ENCODE measurements at regions of chr18 and their contacts with region 1.

Region 1: DNA sequence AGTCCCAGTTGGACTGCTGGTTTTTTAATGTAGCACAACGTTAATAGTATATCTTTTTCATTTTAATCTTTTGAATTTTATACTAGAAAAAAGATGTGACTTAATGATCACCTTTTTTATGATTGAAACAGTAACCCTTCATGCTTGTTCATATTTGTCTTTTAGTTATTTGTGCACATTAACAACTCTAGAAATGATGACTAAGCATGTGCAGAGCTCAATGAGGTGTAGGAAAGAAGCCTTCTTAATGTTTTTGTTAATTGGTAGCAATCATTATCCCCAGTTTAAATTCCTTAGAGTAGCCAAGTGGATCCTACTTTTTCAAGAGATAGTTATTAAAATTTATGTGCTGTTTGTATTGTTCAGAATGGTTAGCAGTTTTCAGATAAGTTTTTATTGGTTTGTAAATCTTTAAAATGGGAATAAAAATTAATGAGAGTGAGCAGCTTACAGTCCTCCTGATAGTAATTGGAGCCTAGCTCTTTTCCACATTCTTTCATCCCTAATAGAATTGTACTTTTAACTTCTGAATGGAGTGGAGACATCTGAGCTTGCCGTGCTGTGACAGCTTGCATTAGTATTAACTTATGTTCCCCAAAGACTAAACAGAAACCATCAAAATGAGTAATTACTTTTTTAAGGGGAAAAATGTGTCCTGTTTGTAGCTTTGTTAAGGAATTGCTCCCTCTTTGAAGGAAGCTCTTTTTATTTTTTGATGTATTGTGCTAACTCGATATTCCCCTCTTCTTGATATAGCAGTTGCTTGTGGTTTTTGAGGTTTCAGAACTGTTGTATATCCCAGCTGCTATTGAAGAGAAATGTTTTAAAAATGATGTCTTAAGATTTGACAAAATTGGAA is 17.3 kb downstream of the PIK3C3 start:
- DNase-seq: no peak
- ATAC-seq: peak; percentile 48
- H3K4me3 ChIP-seq: no peak overlapping the region; the same call in 1 of the 2 replicates
- H3K27ac ChIP-seq: peak overlapping the region; percentile 24; the same call in 1 of the 2 replicates
- H3K4me1 ChIP-seq: peaks cover 10% of the 10 kb centered on the region
- H3K27me3 ChIP-seq: no peaks in the 10 kb centered on the region
- CTCF ChIP-seq: no peak
- EP300 ChIP-seq: no peak
- POLR2A ChIP-seq: no peak
- RAD21 ChIP-seq: no peak

Region 2: DNA sequence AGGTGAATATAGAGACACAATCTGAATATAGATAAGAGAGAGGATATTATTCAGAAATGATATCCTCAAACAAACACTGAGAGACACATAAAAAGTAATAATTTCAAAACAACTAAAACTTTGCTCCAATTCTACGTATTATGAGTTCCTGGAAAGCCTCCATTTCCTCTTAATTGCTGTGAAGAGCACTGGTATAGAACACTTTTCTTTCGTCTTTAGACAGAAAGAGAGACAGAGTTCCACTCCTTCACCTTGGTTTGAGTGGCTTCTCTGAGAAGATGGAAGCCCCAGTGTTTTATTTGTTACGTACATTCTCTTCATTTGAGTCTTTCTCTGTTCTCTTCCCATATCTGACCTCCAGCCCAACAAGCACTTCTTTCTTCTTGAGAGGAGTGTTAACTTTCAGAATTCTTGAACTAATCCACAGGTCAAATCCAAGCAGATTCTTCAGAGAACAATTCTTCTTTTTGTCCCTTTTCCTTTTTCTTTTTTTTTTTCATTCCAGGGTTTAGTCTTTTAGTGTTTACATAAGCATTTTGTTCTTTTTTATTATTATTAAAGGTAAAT is 23.7 kb before region 1 on chr18:
- CTCF ChIA-PET with region 1: interaction called, 4 read pairs
- POLR2A ChIA-PET with region 1: interaction called, 4 read pairs
- RAD21 ChIA-PET with region 1: interaction called, 8 read pairs
- SMC1A ChIA-PET with region 1: interaction called, 13 read pairs
- in situ Hi-C with region 1: no loop called
- intact Hi-C with region 1: no loop called
- DNase-seq: no peak
- ATAC-seq: no peak
- H3K4me3 ChIP-seq: no peak overlapping the region
- H3K27ac ChIP-seq: 0 out of 2 replicates have a peak overlapping the region, but pooled peaks have one; percentile 18
- H3K4me1 ChIP-seq: peaks cover 6% of the 10 kb centered on the region
- H3K27me3 ChIP-seq: no peaks in the 10 kb centered on the region
- CTCF ChIP-seq: no peak
- EP300 ChIP-seq: no peak
- POLR2A ChIP-seq: no peak
- RAD21 ChIP-seq: no peak

Region 3: DNA sequence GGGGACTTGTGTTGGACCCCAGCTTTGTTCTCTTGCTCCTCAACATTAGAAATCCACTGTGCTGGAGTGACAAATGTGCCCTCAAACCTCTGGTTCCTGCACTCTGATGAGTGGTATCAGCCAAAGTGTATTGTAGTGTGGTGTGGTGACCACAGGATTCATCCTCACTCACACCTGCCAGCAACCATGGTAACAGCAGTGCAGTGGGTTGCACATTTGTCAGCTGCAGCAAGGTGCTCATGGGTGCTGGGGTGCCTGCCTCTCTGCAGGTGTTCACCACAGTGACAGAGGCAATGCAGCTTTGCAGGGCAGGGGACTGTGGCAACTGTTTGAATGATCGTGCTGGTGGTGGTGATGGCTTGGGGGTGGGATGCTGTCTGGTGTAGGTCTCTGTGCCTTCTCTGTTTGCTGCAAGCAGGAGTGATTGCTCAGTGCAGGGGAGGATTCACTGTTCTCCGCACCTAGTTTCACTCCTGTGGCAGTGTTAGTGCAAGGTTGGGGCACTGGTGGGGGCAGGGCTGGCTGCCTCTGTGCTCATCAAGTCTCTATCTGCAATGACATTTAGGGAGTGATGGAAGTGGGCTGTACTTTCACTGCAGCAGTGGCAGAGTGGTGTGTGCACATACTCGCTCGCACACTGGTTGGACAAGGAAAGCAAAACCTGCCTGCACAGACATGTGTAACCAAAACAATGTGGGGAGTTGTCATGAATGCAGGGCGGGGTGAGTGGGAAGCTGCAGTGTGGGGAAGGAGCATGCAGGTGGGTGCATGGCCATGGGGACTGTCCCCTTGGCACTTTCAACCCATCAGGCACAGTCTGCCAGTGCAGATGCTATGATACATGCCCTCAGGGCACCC is 283.8 kb after region 1 on chr18:
- CTCF ChIA-PET with region 1: no interaction called
- POLR2A ChIA-PET with region 1: no interaction called
- RAD21 ChIA-PET with region 1: no interaction called
- SMC1A ChIA-PET with region 1: no interaction called
- in situ Hi-C with region 1: no loop called
- intact Hi-C with region 1: no loop called
- DNase-seq: no peak
- ATAC-seq: peak; percentile 66
- H3K4me3 ChIP-seq: no peak overlapping the region
- H3K27ac ChIP-seq: no peak overlapping the region
- H3K4me1 ChIP-seq: no peaks in the 10 kb centered on the region
- H3K27me3 ChIP-seq: no peaks in the 10 kb centered on the region; a peak in 1 of 4 replicates
- CTCF ChIP-seq: no peak
- EP300 ChIP-seq: no peak
- POLR2A ChIP-seq: no peak
- RAD21 ChIP-seq: no peak

Measured in GM12878 (cell line).